ENCODE measurements at regions of chr4 and their contacts with region 1.

Region 1: DNA sequence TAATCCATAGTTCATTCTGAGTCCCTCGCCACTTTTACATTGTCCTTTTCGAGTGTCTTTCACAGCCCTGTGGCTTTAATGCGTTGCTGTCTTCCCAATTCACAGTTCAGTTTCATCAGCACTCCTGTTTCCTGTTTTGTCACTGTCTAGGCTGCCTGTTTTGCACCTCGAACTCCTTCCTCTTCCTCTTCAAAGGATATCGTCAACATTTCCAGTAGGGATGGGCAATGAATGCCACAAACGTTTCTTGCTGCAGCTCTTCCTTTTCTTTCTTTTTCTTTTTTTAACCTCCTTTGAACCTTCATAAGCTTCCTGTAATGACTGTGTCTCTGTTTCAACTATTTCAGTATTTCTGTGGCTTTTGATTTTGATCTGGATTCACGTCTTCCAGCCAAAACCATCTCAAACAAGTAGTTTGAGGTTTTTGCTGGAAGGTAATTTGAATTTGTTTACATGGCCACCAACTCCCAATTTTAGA is 105.4 kb downstream of the ANXA3 start:
- DNase-seq: peak; percentile 24
- H3K4me3 Mint-ChIP-seq: peak overlapping the region; percentile 51
- H3K27ac Mint-ChIP-seq: peak overlapping the region; percentile 48
- H3K4me1 Mint-ChIP-seq: peaks cover 61% of the 10 kb centered on the region
- H3K27me3 Mint-ChIP-seq: no peaks in the 10 kb centered on the region

Region 2: GRCh38 chr4:77862478-77863216 is 794.4 kb before region 1 on chr4 and contains the start of gene MRPL1:
- intact Hi-C with region 1: loop called (anchors 5 kb)
- DNase-seq: peak; percentile 84
- H3K4me3 Mint-ChIP-seq: peak within 1 kb of the TSS; percentile 90
- H3K27ac Mint-ChIP-seq: peak within 1 kb of the TSS; percentile 94
- H3K4me1 Mint-ChIP-seq: peaks cover 48% of the 10 kb centered on the region
- H3K27me3 Mint-ChIP-seq: no peaks in the 10 kb centered on the region
- total RNA-seq, gene MRPL1: 72.7 and 75.0 TPM in 2 replicates

Region 3: DNA sequence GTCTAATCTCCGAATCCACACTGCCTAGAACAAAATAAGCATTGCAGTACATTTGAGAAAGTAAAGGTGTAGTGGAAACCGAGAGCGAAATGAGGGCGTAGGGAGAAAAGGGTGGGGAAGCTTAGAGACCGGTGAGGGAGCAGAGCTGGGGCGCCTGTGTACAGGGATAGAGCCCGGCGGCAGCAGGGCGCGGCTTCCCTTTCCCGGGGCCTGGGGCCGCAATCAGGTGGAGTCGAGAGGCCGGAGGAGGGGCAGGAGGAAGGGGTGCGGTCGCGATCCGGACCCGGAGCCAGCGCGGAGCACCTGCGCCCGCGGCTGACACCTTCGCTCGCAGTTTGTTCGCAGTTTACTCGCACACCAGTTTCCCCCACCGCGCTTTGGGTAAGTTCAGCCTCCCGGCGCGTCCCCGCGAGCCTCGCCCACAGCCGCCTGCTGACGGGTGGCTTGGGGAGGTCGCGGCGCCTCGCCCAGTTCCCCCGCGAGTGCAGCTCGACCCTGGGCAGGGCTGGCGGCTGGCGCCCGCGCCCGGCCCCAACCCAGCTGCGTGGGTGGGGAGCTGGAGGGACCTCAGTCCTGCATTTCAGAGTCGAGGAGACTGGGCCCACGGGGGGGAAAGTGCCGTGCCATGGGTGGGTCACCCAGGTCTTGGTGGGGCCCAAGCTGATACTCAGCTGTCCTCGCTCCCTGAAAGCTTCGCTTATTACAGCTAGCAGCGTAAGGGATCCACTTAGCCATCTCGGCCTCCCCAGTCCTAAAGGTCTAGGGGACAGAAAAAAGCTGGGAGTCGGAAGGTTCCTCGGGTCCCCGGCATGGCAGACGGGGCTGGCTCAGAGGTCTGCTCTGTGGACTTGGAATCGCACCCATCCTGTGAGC is 105.3 kb before region 1 on chr4 and contains the start of gene ANXA3:
- intact Hi-C with region 1: loop called (anchors 1 kb)
- DNase-seq: peak; percentile 25
- H3K4me3 Mint-ChIP-seq: peak within 1 kb of the TSS; percentile 90
- H3K27ac Mint-ChIP-seq: peak within 1 kb of the TSS; percentile 73
- H3K4me1 Mint-ChIP-seq: peaks cover 29% of the 10 kb centered on the region
- H3K27me3 Mint-ChIP-seq: peaks cover 18% of the 10 kb centered on the region
- total RNA-seq, gene ANXA3: 8.1 and 9.2 TPM in 2 replicates

Region 4: GRCh38 chr4:78775303-78776030 is 118.5 kb after region 1 on chr4:
- intact Hi-C with region 1: loop called (anchors 1 kb)
- DNase-seq: peak; percentile 86
- H3K4me3 Mint-ChIP-seq: peak overlapping the region; percentile 95
- H3K27ac Mint-ChIP-seq: peak overlapping the region; percentile 96
- H3K4me1 Mint-ChIP-seq: peaks cover 38% of the 10 kb centered on the region
- H3K27me3 Mint-ChIP-seq: no peaks in the 10 kb centered on the region

Region 5: GRCh38 chr4:80007745-80008149 is 1350.7 kb after region 1 on chr4:
- intact Hi-C with region 1: loop called (anchors 2 kb)
- DNase-seq: no peak
- H3K4me3 Mint-ChIP-seq: peak overlapping the region; percentile 41
- H3K27ac Mint-ChIP-seq: peak overlapping the region; percentile 88
- H3K4me1 Mint-ChIP-seq: peaks cover 74% of the 10 kb centered on the region
- H3K27me3 Mint-ChIP-seq: no peaks in the 10 kb centered on the region

Measured in activated T-helper 1 cell treated with anti-CD3 and anti-CD28 coated beads, Interleukin-12 subunit alpha, Interleukin-12 subunit beta, Interleukin-2, Interleukin-4 antibody, amounts not matched to agents 30 ng/mL and 10 ng/mL and 1 ng/mL, durations not matched to agents 14 hours and 24 hours and 36 hours (primary cell).